Activated CD8-positive, alpha-beta T cell treated with anti-CD3 and anti-CD28 coated beads, Interleukin-2, amount 10 ng/mL, durations not matched to agents 7 days and 5 days (primary cell): ENCODE measurements at regions of chr9 and their contacts with region 1.

Region 1: GRCh38 chr9:127503947-127504782 is 52.9 kb downstream of the LRSAM1 start:
- DNase-seq: peak; percentile 88
- ATAC-seq: peak; percentile 91
- H3K4me3 Mint-ChIP-seq: no peak overlapping the region
- H3K27ac Mint-ChIP-seq: peak overlapping the region; percentile 57
- H3K4me1 Mint-ChIP-seq: peaks cover 2% of the 10 kb centered on the region
- H3K27me3 Mint-ChIP-seq: no peaks in the 10 kb centered on the region

Region 2: GRCh38 chr9:127493592-127494301 is 10.4 kb before region 1 on chr9:
- CTCF ChIA-PET with region 1: interaction called, 11 read pairs
- POLR2A ChIA-PET with region 1: no interaction called
- DNase-seq: no peak
- ATAC-seq: no peak
- H3K4me3 Mint-ChIP-seq: no peak overlapping the region
- H3K27ac Mint-ChIP-seq: no peak overlapping the region
- H3K4me1 Mint-ChIP-seq: peaks cover 14% of the 10 kb centered on the region
- H3K27me3 Mint-ChIP-seq: no peaks in the 10 kb centered on the region

Region 3: DNA sequence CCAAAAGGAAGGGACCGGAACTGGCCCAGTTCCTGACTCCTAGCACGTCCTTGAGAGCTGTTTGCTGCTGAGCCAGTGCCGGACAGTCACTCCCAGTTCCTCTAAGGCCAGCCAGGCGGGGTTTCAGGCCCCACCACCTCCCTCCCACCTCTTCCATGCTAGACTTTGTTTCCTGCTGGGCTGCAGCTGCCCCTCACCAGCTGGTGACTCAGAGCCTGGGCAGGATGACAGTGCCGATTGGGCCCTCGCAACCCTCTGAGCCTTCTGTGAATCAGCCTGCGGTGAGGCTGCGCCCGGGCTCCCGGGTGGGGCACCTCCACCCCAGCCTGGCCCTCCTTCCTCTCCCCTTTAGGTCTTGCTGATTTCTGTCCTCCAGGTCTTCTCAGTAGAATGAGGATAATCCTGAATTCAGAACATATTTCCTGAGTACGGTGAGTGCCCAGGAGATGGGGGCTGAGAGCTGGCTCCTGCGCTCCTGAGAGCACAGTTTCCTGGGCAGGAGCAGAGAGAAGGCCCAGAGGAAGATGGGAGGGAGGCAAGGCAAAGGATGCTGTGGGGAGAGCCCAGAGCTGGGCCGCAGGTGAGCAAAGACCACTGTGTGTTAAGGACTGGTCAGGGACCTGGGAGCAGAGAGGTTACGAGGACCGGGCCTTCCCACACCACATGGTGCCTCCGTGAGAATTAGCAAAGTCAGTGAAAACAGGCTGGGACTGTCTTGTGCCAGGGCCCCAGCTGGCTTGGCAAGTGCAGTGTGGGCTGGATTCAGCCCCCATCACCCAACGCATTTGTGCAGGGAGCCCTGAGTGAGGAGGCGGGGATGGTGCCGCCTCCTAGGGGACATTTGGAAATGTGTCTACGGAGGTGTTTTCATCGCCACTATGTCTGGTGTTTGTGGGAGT is 75.0 kb after region 1 on chr9:
- CTCF ChIA-PET with region 1: interaction called, 40 read pairs
- POLR2A ChIA-PET with region 1: no interaction called
- DNase-seq: peak; percentile 88
- ATAC-seq: peak; percentile 99
- H3K4me3 Mint-ChIP-seq: peak overlapping the region; percentile 82
- H3K27ac Mint-ChIP-seq: peak overlapping the region; percentile 93
- H3K4me1 Mint-ChIP-seq: peaks cover 58% of the 10 kb centered on the region
- H3K27me3 Mint-ChIP-seq: no peaks in the 10 kb centered on the region